IMR-90 (cell line): ENCODE measurements at regions of chr17 and their contacts with region 1.

Region 1: DNA sequence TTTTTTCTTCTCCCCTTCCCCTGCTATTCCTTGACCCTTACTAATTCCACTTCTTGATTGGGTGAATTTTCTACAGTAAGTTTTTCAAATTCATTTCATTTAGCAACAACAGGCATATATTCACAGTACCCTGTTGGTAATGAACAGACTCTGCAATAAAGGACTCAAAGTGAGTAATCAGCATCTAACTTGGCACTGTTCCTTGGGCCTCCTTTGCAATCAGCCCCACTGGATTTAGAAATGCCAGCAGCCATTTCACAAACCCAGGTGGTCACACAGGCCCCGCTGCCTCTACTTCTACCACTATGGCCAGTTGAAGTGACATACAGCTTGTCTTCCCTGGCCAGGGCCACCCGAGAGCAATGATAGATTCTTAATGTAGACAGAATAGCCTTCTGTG is 113.8 kb downstream of the CYB561 start:
- DNase-seq: no peak
- ATAC-seq: no peak
- H3K4me3 ChIP-seq: no peak overlapping the region
- H3K27ac ChIP-seq: no peak overlapping the region
- H3K4me1 ChIP-seq: no peaks in the 10 kb centered on the region
- H3K27me3 ChIP-seq: no peaks in the 10 kb centered on the region
- CTCF ChIP-seq: no peak
- POLR2A ChIP-seq: no peak
- RAD21 ChIP-seq: no peak

Region 2: GRCh38 chr17:63293323-63294075 is 38.8 kb before region 1 on chr17:
- CTCF ChIA-PET with region 1: no interaction called
- POLR2A ChIA-PET with region 1: no interaction called
- dilution Hi-C with region 1: no loop called
- in situ Hi-C with region 1: no loop called
- intact Hi-C with region 1: loop called (anchors 5 kb)
- DNase-seq: peak; percentile 72
- ATAC-seq: peak; percentile 79
- H3K4me3 ChIP-seq: no peak overlapping the region
- H3K27ac ChIP-seq: peak overlapping the region; percentile 17; the same call in 1 of the 2 replicates
- H3K4me1 ChIP-seq: peaks cover 9% of the 10 kb centered on the region
- H3K27me3 ChIP-seq: no peaks in the 10 kb centered on the region
- CTCF ChIP-seq: no peak
- POLR2A ChIP-seq: no peak
- RAD21 ChIP-seq: no peak